Activated CD8-positive, alpha-beta T cell treated with anti-CD3 and anti-CD28 coated beads, Interleukin-2, amount 10 ng/mL, durations not matched to agents 7 days and 5 days (primary cell): ENCODE measurements at regions of chr12 and their contacts with region 1.

Region 1: DNA sequence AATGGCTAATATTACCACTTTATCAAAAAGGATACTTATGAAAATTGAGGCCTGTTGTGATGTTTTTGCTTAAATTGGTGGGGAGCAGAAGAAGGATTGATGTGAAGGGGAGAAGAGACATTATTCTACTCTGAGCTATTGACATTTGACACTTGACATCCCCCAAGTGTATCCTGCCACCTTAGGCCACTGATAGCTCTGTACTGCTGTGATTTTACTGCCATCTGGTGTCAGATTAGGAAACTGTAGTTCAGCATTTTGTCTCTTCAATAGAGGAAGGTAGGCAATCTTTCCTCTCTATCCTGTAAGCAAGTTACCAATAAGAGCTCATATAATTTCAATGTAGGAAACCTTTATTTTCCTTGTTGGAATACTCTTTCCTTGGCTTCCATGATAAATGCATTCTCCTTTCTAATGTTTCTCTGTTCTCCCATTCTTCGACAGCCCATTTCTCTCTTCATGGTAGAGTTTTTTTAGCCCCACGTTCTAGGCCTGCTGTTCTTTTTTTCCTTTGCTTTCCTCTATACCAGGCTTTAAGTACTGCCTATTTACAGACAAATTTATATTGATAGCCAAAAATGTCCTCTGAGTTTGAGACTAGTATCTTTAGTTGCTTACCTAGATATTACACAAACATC is 46.3 kb downstream of the PPHLN1 start:
- DNase-seq: peak; percentile 52
- ATAC-seq: peak; percentile 86
- H3K4me3 Mint-ChIP-seq: no peak overlapping the region
- H3K27ac Mint-ChIP-seq: no peak overlapping the region
- H3K4me1 Mint-ChIP-seq: no peaks in the 10 kb centered on the region
- H3K27me3 Mint-ChIP-seq: no peaks in the 10 kb centered on the region

Region 2: GRCh38 chr12:42023733-42024494 is 348.4 kb before region 1 on chr12:
- CTCF ChIA-PET with region 1: interaction called, 17 read pairs
- POLR2A ChIA-PET with region 1: no interaction called
- DNase-seq: peak; percentile 72
- ATAC-seq: peak; percentile 92
- H3K4me3 Mint-ChIP-seq: peak overlapping the region; percentile 26
- H3K27ac Mint-ChIP-seq: no peak overlapping the region
- H3K4me1 Mint-ChIP-seq: peaks cover 6% of the 10 kb centered on the region
- H3K27me3 Mint-ChIP-seq: peaks cover 7% of the 10 kb centered on the region

Region 3: GRCh38 chr12:42213023-42213422 is 159.2 kb before region 1 on chr12:
- CTCF ChIA-PET with region 1: no interaction called
- POLR2A ChIA-PET with region 1: no interaction called
- DNase-seq: no peak
- ATAC-seq: no peak
- H3K4me3 Mint-ChIP-seq: no peak overlapping the region
- H3K27ac Mint-ChIP-seq: no peak overlapping the region
- H3K4me1 Mint-ChIP-seq: peaks cover 5% of the 10 kb centered on the region
- H3K27me3 Mint-ChIP-seq: no peaks in the 10 kb centered on the region

Region 4: DNA sequence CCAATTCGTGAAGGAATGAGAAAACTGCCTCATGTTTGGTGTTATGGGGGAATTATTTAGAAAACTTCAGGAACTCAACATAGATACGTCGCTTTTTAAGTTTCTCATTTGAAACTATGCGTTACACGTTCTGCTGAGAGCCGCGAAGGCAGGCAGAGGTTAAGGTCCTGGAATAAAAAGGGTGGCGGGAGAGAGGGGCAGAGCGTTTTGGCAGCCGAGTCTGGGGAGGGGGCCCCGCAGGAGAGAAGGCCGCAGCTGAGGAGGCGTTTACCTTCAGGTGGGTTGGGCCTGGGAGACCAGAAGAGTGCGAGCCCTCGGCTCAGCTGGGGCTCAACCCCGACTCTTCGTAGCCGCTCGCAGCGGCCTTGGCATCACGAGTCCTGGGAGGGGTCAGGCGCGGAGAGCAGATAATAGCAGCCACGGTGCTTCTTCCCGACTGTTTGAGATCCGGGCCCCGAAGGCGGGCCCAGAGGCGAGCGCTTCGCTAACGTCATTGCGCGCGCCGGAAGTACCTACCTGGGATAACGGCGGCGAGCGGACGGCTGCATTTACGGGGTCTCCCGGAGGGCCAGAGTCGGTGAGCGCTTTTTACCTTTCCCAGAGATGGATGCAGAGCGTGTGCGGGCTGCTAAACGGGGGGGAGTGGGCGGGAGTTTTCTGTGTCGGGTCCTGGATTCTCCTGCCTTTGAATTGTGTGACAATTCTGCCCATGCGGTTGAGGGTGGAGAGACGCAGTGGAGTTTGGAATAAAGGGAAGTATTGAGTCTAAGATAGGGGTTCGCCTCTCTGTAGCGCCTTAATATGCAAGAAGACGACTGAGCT is 46.4 kb before region 1 on chr12 and contains the starts of genes PPHLN1 and ZCRB1:
- CTCF ChIA-PET with region 1: interaction called, 13 read pairs
- POLR2A ChIA-PET with region 1: interaction called, 4 read pairs
- DNase-seq: peak; percentile 87
- ATAC-seq: peak; percentile 94
- H3K4me3 Mint-ChIP-seq: peak within 1 kb of the TSS; percentile 98
- H3K27ac Mint-ChIP-seq: peak within 1 kb of the TSS; percentile 93
- H3K4me1 Mint-ChIP-seq: peaks cover 42% of the 10 kb centered on the region
- H3K27me3 Mint-ChIP-seq: no peaks in the 10 kb centered on the region
- total RNA-seq, gene PPHLN1: 76.9 to 79.3 TPM
- total RNA-seq, gene ZCRB1: 46.6 to 51.1 TPM

Region 5: DNA sequence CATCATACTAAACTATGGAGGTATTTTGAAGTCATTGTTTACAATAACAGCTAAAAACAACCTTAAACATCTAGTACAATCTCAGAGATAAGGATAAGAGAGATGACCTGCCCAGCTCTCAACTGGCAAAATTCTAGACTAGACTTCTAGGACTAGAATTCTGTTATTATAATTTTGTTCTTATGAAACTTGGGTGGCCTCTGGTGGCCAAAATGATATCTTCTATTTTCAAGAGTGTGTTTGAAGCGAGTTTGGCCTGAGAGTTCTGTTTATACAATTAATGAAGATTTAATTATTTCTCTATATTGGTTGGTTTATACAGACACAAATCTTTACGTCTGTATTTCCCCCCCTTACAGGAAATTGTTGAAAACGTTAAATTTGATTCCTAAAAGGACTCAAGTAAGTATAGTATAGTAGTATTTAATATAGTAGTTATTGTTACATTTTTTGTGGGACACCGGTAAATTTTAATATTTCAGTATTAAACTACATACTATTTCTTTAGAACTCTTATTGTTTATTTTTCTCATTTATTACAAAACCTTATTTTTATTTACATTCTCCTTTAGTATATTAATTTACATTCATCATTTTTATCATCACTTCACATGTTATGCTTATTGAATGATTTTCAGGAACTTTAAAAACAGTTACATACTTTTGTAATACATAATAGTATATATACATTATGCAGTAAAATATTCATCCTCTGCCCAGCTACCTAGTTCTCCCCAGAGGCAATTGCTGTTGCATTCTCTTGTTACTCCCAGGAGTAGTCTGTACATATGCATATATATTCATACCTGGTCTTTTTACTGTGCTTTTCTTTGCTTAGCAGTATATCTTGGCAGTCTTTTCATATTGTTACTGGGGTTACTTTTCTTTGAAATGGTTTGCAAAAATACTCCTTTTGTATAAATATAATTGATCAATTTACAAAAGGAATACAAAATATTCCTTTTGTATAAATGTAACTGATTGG is 39.7 kb before region 1 on chr12:
- CTCF ChIA-PET with region 1: interaction called, 13 read pairs
- POLR2A ChIA-PET with region 1: no interaction called
- DNase-seq: peak; percentile 48
- ATAC-seq: no peak
- H3K4me3 Mint-ChIP-seq: no peak overlapping the region
- H3K27ac Mint-ChIP-seq: no peak overlapping the region
- H3K4me1 Mint-ChIP-seq: peaks cover 46% of the 10 kb centered on the region
- H3K27me3 Mint-ChIP-seq: no peaks in the 10 kb centered on the region

Region 6: DNA sequence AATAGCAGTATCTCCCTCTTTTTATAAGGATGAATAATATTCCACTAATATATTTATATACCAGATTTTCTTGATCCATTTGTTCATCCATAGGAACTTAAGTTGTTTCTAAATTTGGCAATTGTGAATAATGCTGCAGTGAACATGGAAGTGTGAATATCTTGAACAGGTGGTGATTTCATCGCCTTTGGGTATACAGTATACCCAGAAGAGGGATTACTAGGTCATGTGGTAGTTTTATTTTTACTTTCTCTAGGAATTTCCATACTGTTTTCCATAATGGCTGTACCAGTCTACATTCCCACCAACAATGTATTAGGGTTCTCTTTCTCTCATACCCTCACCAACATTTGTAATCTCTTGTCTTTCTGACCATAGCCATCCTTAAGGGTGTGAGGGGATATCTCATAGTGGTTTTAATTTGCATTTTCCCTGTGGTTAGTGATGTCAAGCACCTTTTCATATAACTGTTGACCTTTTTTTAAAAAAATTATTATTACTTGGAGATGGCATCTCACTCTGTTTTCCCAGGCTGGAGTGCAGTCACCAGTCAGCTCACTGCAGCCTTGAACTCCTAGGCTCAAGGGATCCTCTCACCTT is 25.8 kb before region 1 on chr12:
- CTCF ChIA-PET with region 1: interaction called, 14 read pairs
- POLR2A ChIA-PET with region 1: no interaction called
- DNase-seq: no peak
- ATAC-seq: no peak
- H3K4me3 Mint-ChIP-seq: no peak overlapping the region
- H3K27ac Mint-ChIP-seq: no peak overlapping the region
- H3K4me1 Mint-ChIP-seq: peaks cover 4% of the 10 kb centered on the region
- H3K27me3 Mint-ChIP-seq: no peaks in the 10 kb centered on the region

Region 7: GRCh38 chr12:42360747-42361403 is 11.4 kb before region 1 on chr12:
- CTCF ChIA-PET with region 1: interaction called, 19 read pairs
- POLR2A ChIA-PET with region 1: no interaction called
- DNase-seq: no peak
- ATAC-seq: no peak
- H3K4me3 Mint-ChIP-seq: no peak overlapping the region
- H3K27ac Mint-ChIP-seq: peak overlapping the region; percentile 48
- H3K4me1 Mint-ChIP-seq: peaks cover 20% of the 10 kb centered on the region
- H3K27me3 Mint-ChIP-seq: no peaks in the 10 kb centered on the region

Region 8: GRCh38 chr12:42568952-42569915 is 197.0 kb after region 1 on chr12:
- CTCF ChIA-PET with region 1: no interaction called
- POLR2A ChIA-PET with region 1: no interaction called
- DNase-seq: no peak
- ATAC-seq: no peak
- H3K4me3 Mint-ChIP-seq: no peak overlapping the region
- H3K27ac Mint-ChIP-seq: no peak overlapping the region
- H3K4me1 Mint-ChIP-seq: no peaks in the 10 kb centered on the region
- H3K27me3 Mint-ChIP-seq: peaks cover 3% of the 10 kb centered on the region